HEK293 (cell line): ENCODE measurements at regions of chr1 and their contacts with region 1.

Region 1: DNA sequence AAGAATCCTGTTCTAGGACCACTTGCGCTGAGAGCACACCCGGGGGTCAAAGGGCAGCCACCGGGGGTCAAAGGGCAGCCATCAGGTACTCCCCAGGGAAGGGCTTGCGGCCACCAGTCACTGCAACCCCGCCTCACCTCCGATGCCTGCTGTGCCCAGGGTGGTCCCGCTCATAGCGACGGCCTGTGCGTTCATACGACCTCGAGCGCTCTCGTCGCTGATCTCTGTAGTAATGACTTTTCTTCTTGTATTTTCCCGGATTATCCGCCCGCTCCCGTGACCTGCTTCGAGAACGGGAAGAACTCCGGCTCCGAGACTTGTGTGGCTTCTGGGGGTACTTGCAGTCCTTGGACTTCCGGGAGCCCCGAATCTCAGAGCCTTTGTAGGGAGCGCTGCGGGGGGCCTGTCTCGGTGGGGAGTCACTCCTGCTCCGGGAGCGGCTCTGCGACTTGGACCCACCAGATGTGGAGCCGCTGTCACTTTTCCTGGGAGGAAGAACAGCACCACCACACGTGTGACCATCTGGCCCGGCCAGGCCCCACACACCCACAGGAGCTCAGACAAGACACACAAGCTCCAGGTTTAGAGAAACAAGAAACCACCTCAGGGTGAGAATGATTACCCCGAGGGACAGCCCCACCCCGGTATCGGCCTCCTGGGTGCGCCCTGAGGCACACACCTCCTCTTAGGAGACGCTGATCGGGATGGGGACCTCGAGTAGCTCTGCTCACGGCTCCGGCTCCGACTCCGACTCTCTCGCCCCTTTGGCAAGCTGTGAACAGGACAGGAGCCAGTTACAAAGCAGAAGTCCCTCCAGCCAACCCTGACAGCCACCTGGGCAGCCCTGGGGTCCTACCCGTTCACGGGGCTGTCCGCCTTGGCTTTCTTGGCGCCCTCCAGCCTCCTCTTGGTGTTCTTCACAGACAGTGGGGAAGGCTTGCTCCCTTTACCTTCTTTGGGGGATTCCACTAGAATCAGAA is 11.7 kb downstream of the CCNL2 start:
- H3K4me3 ChIP-seq: no peak overlapping the region
- H3K27ac ChIP-seq: no peak overlapping the region
- H3K4me1 ChIP-seq: no peaks in the 10 kb centered on the region
- CTCF ChIP-seq: no peak

Region 2: GRCh38 chr1:1399187-1399871 is 11.9 kb after region 1 on chr1 and contains the start of gene CCNL2:
- CTCF ChIA-PET with region 1: interaction called, 6 read pairs
- POLR2A ChIA-PET with region 1: interaction called, 15 read pairs
- H3K4me3 ChIP-seq: peak within 1 kb of the TSS; percentile 95
- H3K27ac ChIP-seq: peak within 1 kb of the TSS; percentile 89
- H3K4me1 ChIP-seq: no peaks in the 10 kb centered on the region
- CTCF ChIP-seq: peak; percentile 93